Ascending aorta (tissue), 2 donors: ENCODE measurements at regions of chr15 and their contacts with region 1.

Region 1: DNA sequence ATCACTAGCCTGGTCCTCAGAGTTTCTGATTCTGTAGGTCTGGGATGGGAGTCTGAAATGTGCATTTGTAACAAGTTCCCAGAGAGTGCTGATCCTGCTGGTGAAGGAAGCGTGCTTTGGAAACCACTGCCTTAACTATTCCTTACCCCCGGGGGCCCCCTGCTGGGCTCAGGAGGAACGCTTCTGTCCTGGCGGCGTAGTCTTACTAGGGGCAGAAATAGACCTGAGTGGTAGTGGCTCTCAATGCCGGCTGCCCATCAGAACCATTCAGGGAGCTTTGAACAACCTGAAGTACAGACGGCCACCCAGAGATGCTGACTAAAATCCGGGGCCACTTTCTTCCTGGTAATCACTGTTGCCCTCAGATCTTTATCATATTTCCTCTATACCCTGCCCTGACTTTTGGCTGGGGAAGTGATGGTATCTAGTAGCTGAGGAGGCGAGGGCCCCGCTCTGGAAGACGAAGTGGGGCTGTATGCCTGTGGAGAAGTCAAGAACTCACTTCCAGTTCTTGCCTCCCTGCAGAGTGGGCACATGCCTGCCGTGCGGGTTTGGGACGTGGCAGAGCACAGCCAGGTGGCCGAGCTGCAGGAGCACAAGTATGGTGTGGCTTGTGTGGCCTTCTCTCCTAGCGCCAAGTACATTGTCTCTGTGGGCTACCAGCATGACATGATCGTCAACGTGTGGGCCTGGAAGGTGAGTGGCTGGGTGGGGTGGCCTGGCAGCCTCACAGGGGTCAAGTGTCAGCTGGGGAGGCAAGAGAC is 16.3 kb upstream of the JMJD7 start:
- DNase-seq: peak in 1 of 2 donors; percentile 89
- H3K4me3 ChIP-seq: no peak overlapping the region
- H3K27ac ChIP-seq: no peak overlapping the region
- H3K4me1 ChIP-seq: no peaks in the 10 kb centered on the region
- H3K27me3 ChIP-seq: no peaks in the 10 kb centered on the region
- CTCF ChIP-seq: peak; percentile 85 to 88 (median 86)

Region 2: DNA sequence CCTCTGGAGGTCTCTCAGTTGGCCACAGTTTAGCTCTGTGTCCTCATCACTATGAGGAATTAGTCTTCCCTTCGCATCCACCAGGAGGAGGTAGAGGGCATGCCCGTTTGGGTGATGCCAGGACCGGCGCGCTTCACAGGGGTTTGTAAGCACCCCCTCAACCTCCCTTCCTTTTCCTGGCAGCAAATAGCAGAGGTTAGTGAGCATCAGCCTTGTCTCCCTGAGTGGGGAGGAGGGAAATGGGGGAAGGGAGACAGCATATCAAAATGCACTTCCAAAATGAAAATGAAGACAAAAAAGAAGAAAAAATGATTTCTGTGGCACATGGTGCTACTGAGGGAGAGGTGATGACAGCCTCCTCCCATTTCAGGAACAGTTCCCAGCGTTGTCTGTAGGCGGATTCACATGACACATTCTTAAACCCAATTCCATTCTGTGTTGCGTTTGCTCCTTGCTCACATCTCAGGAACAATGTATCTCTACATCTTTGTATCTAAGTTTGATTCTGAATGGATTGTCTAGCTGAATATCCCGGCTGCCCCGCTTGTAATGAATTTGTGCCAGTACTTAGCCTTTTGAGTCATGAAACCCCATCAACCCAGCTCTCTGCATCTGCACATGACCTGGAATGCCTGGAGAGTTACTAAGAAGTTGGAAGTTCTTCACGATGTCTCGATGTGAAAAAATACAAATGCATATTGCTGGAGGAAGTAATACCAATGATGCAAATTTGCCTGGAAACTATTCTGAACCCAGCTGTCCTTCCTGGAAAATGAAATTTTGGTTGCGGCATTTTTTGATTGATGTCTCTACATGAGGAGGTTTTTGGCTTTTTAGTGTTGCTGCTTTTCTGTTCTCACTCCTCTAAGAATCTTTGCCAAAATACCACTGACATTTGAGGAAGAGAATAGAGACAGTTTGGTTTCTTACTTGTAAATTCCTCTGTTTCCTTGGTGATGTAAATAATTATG is 207.4 kb before region 1 on chr15:
- intact Hi-C with region 1: loop called (anchors 2 kb)
- DNase-seq: peak in 1 of 2 donors; percentile 81
- H3K4me3 ChIP-seq: peak overlapping the region; percentile 34 to 53
- H3K27ac ChIP-seq: no peak overlapping the region
- H3K4me1 ChIP-seq: peaks cover 0 to 3% of the 10 kb centered on the region in 2 donors
- H3K27me3 ChIP-seq: no peaks in the 10 kb centered on the region
- CTCF ChIP-seq: peak; percentile 44 to 83 (median 72)